Dorsolateral prefrontal cortex (tissue), 120 donors: ENCODE measurements at regions of chr11 and their contacts with region 1.

Region 1: DNA sequence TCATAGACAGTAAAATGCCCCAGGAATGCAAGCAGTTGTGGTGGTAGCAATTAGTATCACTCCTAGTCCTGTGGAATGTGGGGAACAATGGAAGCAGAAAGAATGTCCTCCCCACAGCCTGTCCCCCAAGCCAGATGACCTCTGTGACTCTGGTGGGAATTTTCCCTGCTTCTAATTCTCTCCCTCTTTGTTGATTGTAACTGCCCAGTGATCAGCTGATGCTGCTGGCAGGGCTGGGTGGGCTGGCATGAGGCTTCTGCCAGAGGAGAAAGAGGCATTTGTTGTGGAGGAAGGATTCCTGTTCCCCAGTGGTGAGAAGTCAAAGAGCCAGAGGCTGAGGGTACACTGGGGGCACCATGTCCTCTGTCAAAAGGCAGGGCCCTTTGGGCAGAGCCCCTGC is 116.7 kb upstream of the NCAM1 start:
- DNase-seq: peak; percentile 38 to 94 (median 88)
- H3K4me3 ChIP-seq: peak overlapping the region in 1 of 59 donors; percentile 14
- H3K27ac ChIP-seq: peak overlapping the region; percentile 5 to 99 (median 91)
- H3K27me3 ChIP-seq: no peaks in the 10 kb centered on the region
- CTCF ChIP-seq: peak in 33 of 56 donors; percentile 6 to 56 (median 36)

Region 2: DNA sequence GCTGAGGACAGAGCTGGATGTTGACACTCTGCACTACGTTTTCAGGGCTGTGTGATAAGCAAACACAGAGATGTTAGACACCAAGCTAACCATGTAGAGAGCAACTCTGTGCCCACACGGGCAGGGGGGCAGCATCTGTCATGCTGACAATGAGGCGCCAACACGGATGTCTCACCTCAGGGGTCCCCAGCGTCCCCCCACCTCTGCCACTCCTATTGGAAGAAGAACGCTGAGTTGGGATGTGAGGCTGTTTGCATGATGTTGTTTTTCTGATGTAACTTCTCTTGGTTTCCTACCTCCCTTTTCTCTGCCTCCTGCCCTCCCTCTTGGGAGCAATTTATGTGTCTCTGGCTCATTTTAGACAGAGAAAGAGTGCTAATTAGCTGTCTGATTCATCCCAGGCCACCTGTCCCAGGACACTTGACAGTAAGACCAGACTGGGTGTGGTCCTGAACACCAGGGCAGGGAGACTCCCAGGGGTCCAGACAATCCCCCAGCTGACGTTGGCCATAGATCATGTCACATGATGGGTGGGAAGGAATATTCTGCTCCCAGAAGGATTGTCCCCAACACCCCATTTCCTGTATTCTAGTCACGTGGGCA is 27.5 kb after region 1 on chr11:
- intact Hi-C with region 1: no loop called
- DNase-seq: no peak
- H3K4me3 ChIP-seq: no peak overlapping the region
- H3K27ac ChIP-seq: no peak overlapping the region
- H3K27me3 ChIP-seq: peaks cover 0 to 3% (median 0%) of the 10 kb centered on the region in 45 donors
- CTCF ChIP-seq: no peak

Region 3: GRCh38 chr11:112886434-112887373 is 42.2 kb after region 1 on chr11:
- intact Hi-C with region 1: loop called in 1 of 2 experiments (anchors 5 kb)
- DNase-seq: no peak
- H3K4me3 ChIP-seq: no peak overlapping the region
- H3K27ac ChIP-seq: peak overlapping the region in 3 of 59 donors; percentile 13 to 26 (median 19)
- H3K27me3 ChIP-seq: no peaks in the 10 kb centered on the region
- CTCF ChIP-seq: no peak

Region 4: GRCh38 chr11:112902361-112903011 is 58.0 kb after region 1 on chr11:
- intact Hi-C with region 1: loop called (anchors 2 kb)
- DNase-seq: no peak
- H3K4me3 ChIP-seq: peak overlapping the region in 7 of 59 donors; percentile 2 to 35 (median 12)
- H3K27ac ChIP-seq: peak overlapping the region; percentile 73 to 99 (median 93)
- H3K27me3 ChIP-seq: no peaks in the 10 kb centered on the region
- CTCF ChIP-seq: no peak

Region 5: DNA sequence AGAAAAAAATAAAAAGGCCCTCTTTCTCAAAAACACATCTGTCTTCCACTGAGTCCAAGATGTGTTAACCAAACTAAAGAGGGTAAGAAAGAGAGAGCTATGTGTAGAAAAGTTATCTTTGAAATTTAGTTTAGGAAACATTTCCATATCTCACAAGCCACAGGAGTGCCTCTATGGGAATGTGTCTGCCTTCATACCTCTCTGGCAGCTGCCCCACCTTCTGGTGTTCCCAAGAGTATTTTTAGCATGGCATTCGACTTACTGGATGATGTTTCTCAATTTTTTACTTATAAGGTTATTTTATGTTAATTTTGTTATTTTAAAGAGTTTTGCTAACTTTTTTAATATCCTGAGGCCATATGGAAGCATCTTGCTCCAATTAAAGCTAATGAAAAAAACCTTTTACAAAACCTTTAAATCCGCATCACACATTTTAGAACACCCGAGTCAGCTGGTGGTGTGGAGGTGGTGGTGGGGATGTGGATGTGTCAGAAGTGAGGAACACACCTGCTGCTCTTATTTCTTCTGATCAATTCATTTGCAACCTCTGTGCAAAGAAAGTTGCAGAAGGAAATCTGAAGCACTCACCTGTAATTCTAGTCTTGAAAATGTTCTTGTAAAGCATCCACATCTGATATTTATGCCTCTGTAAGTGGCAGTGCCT is 228.9 kb after region 1 on chr11:
- intact Hi-C with region 1: no loop called
- DNase-seq: no peak
- H3K4me3 ChIP-seq: no peak overlapping the region
- H3K27ac ChIP-seq: no peak overlapping the region
- H3K27me3 ChIP-seq: no peaks in the 10 kb centered on the region
- CTCF ChIP-seq: no peak